ENCODE measurements at regions of chr10 and their contacts with region 1.

Region 1: GRCh38 chr10:68096913-68097503 is 12.3 kb upstream of the MYPN start:
- DNase-seq: peak; percentile 89
- H3K4me3 ChIP-seq: no peak overlapping the region
- H3K27ac ChIP-seq: peak overlapping the region; percentile 42
- H3K4me1 ChIP-seq: peaks cover 27% of the 10 kb centered on the region
- H3K27me3 ChIP-seq: no peaks in the 10 kb centered on the region
- CTCF ChIP-seq: no peak
- POLR2A ChIP-seq: no peak

Region 2: GRCh38 chr10:68032113-68032512 is 64.9 kb before region 1 on chr10:
- CTCF ChIA-PET with region 1: no interaction called
- POLR2A ChIA-PET with region 1: no interaction called
- dilution Hi-C with region 1: no loop called
- intact Hi-C with region 1: no loop called
- DNase-seq: no peak
- H3K4me3 ChIP-seq: no peak overlapping the region
- H3K27ac ChIP-seq: no peak overlapping the region
- H3K4me1 ChIP-seq: no peaks in the 10 kb centered on the region
- H3K27me3 ChIP-seq: no peaks in the 10 kb centered on the region
- CTCF ChIP-seq: no peak
- POLR2A ChIP-seq: no peak

Region 3: GRCh38 chr10:68135922-68136718 is 39.1 kb after region 1 on chr10:
- CTCF ChIA-PET with region 1: interaction called, 4 read pairs
- POLR2A ChIA-PET with region 1: no interaction called
- dilution Hi-C with region 1: no loop called
- intact Hi-C with region 1: loop called (anchors 1 kb)
- DNase-seq: peak; percentile 92
- H3K4me3 ChIP-seq: peak overlapping the region in 1 of 3 experiments; percentile 28
- H3K27ac ChIP-seq: peak overlapping the region; percentile 96
- H3K4me1 ChIP-seq: peaks cover 35% of the 10 kb centered on the region
- H3K27me3 ChIP-seq: no peaks in the 10 kb centered on the region
- CTCF ChIP-seq: no peak
- POLR2A ChIP-seq: peak; percentile 39